ENCODE measurements at regions of chr6 and their contacts with region 1.

Region 1: GRCh38 chr6:150079604-150080003 is 10.7 kb upstream of the ULBP3 start:
- DNase-seq: peak; percentile 63
- ATAC-seq: peak; percentile 64
- H3K4me3 Mint-ChIP-seq: no peak overlapping the region
- H3K27ac Mint-ChIP-seq: peak overlapping the region; percentile 31
- H3K4me1 Mint-ChIP-seq: peaks cover 38% of the 10 kb centered on the region
- H3K27me3 Mint-ChIP-seq: peaks cover 20% of the 10 kb centered on the region

Region 2: DNA sequence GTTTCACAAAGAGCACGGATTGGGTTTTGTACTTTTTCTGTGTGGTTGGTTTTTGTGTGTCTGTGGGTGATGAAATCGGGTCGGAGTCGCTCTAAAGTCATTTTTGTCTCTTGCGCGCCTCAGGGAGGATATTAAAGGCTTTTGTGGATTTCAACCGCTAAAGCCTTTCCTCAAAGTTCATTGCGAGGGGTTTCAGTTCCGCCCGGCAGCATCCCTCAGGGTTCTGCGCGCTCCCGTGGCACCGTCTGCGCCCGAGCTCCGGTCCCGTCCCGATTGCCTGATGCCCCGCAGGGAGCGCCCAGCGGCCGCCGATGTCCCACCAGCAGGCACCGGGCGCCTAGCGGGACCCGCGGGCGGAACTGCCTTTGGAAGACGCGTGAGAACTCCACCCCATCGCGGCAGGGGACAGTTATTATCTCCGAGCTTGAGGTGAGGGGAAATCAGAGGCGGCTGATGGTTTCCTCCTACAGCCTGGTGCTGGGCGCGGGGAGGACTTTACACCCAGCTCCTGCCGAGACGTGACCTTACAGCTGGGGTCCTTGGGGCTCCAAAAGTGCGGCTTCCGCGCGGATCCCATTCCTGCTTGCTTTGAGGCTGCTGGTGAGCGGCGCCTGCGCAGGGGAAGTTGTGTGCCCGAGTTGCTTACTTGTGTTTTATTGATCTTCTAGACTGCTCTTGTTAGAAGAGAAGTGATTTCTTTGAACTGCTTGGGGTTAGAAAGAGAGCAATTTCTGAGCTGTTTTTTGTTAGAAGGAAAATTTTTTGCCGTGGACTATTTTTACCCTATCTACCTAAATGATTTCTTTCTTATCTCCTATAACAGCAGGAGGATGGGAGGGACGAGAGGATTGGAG is 88.8 kb before region 1 on chr6:
- CTCF ChIA-PET with region 1: no interaction called
- POLR2A ChIA-PET with region 1: no interaction called
- DNase-seq: peak; percentile 49
- ATAC-seq: peak; percentile 67
- H3K4me3 Mint-ChIP-seq: peak overlapping the region; percentile 61
- H3K27ac Mint-ChIP-seq: peak overlapping the region; percentile 27
- H3K4me1 Mint-ChIP-seq: peaks cover 32% of the 10 kb centered on the region
- H3K27me3 Mint-ChIP-seq: peaks cover 76% of the 10 kb centered on the region

Region 3: GRCh38 chr6:150068720-150069648 is 10.6 kb before region 1 on chr6 and contains the start of gene ULBP3:
- CTCF ChIA-PET with region 1: interaction called, 43 read pairs
- POLR2A ChIA-PET with region 1: no interaction called
- DNase-seq: peak; percentile 81
- ATAC-seq: peak; percentile 92
- H3K4me3 Mint-ChIP-seq: peak within 1 kb of the TSS; percentile 70
- H3K27ac Mint-ChIP-seq: peak within 1 kb of the TSS; percentile 36
- H3K4me1 Mint-ChIP-seq: peaks cover 22% of the 10 kb centered on the region
- H3K27me3 Mint-ChIP-seq: peaks cover 18% of the 10 kb centered on the region
- total RNA-seq, gene ULBP3: 1.8 to 2.9 TPM

Region 4: GRCh38 chr6:150091476-150091875 is 11.9 kb after region 1 on chr6:
- CTCF ChIA-PET with region 1: interaction called, 12 read pairs
- POLR2A ChIA-PET with region 1: no interaction called
- DNase-seq: no peak
- ATAC-seq: no peak
- H3K4me3 Mint-ChIP-seq: no peak overlapping the region
- H3K27ac Mint-ChIP-seq: no peak overlapping the region
- H3K4me1 Mint-ChIP-seq: peaks cover 2% of the 10 kb centered on the region
- H3K27me3 Mint-ChIP-seq: peaks cover 18% of the 10 kb centered on the region

Region 5: DNA sequence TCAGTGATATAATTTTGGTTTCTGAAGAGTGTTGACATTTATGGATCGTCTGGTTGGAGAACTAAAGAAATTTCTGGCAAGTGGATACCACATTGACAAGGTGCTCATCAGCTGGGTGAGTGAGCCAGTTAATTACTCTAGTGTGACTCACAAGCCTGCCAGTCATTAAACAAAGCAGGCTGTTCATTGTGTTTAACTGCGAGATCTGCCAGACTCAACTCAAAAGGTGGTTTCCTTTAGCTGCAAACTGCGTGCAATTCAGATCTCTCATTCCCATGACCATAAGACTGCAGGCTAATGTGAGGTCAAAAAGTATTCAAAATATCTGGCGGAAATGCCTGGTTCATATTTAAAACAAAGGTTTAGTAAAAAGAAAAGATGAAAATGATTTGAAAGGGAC is 256.7 kb after region 1 on chr6:
- CTCF ChIA-PET with region 1: interaction called, 12 read pairs
- POLR2A ChIA-PET with region 1: no interaction called
- DNase-seq: no peak
- ATAC-seq: no peak
- H3K4me3 Mint-ChIP-seq: no peak overlapping the region
- H3K27ac Mint-ChIP-seq: no peak overlapping the region
- H3K4me1 Mint-ChIP-seq: no peaks in the 10 kb centered on the region
- H3K27me3 Mint-ChIP-seq: peaks cover 4% of the 10 kb centered on the region

Region 6: GRCh38 chr6:150395398-150396009 is 315.9 kb after region 1 on chr6:
- CTCF ChIA-PET with region 1: interaction called, 58 read pairs
- POLR2A ChIA-PET with region 1: no interaction called
- DNase-seq: peak; percentile 52
- ATAC-seq: peak; percentile 70
- H3K4me3 Mint-ChIP-seq: no peak overlapping the region
- H3K27ac Mint-ChIP-seq: no peak overlapping the region
- H3K4me1 Mint-ChIP-seq: no peaks in the 10 kb centered on the region
- H3K27me3 Mint-ChIP-seq: peaks cover 12% of the 10 kb centered on the region